Naive thymus-derived CD4-positive, alpha-beta T cell (primary cell): ENCODE measurements at regions of chr17 and their contacts with region 1.

Region 1: DNA sequence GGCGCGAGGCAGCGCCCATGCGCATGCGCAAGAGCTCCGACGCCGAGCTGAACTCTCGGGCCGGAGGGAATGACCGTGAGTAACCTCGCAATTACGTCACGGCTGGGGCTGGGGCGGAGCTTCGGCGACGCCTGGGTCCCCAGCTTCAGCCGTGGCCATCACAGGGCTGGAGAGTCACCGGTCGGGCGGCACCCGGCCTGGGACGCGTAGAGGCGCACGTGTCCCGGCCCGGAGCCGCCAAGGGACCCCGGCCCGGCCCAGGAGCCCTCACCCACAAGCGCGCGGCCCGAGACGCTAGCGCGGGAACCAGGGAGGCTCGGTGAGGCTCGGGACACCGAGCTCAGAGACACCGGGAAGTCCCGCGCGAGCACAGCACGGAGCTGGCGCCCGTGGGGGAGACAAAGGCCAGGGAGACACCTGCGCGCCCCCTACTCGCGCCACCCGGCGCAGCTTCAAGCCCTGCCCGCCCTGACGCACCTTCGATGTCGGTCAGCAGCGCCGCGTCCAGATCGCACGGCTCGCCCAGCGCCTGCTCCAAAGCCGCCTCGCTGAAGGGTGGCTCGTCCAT is 452 bp downstream of the SREBF1 start:
- DNase-seq: peak; percentile 93 to 99 (median 97)
- ATAC-seq: peak; percentile 85
- H3K4me3 ChIP-seq: peak overlapping the region; percentile 86
- H3K4me3 Mint-ChIP-seq: peak overlapping the region; percentile 85 to 95 (median 90)
- H3K27ac ChIP-seq: peak overlapping the region; percentile 99
- H3K27ac Mint-ChIP-seq: peak overlapping the region; percentile 94 to 99 (median 98)
- H3K4me1 ChIP-seq: peaks cover 18 to 60% of the 10 kb centered on the region in 2 donors
- H3K4me1 Mint-ChIP-seq: peaks cover 46 to 79% (median 75%) of the 10 kb centered on the region in 7 donors
- H3K27me3 ChIP-seq: no peaks in the 10 kb centered on the region
- H3K27me3 Mint-ChIP-seq: no peaks in the 10 kb centered on the region

Region 2: GRCh38 chr17:17849845-17850373 is 13.6 kb after region 1 on chr17:
- CTCF ChIA-PET with region 1: interaction called, 7 read pairs
- POLR2A ChIA-PET with region 1: interaction called, 66 read pairs
- intact Hi-C with region 1: loop called (anchors 1 kb)
- DNase-seq: peak; percentile 33 to 74 (median 69)
- ATAC-seq: peak; percentile 78
- H3K4me3 ChIP-seq: peak overlapping the region; percentile 17
- H3K4me3 Mint-ChIP-seq: peak overlapping the region; percentile 70 to 81 (median 76)
- H3K27ac ChIP-seq: peak overlapping the region; percentile 70
- H3K27ac Mint-ChIP-seq: peak overlapping the region; percentile 95 to 98 (median 96)
- H3K4me1 ChIP-seq: peaks cover 35 to 61% of the 10 kb centered on the region in 2 donors
- H3K4me1 Mint-ChIP-seq: peaks cover 45 to 82% (median 73%) of the 10 kb centered on the region in 7 donors
- H3K27me3 ChIP-seq: no peaks in the 10 kb centered on the region
- H3K27me3 Mint-ChIP-seq: no peaks in the 10 kb centered on the region

Region 3: DNA sequence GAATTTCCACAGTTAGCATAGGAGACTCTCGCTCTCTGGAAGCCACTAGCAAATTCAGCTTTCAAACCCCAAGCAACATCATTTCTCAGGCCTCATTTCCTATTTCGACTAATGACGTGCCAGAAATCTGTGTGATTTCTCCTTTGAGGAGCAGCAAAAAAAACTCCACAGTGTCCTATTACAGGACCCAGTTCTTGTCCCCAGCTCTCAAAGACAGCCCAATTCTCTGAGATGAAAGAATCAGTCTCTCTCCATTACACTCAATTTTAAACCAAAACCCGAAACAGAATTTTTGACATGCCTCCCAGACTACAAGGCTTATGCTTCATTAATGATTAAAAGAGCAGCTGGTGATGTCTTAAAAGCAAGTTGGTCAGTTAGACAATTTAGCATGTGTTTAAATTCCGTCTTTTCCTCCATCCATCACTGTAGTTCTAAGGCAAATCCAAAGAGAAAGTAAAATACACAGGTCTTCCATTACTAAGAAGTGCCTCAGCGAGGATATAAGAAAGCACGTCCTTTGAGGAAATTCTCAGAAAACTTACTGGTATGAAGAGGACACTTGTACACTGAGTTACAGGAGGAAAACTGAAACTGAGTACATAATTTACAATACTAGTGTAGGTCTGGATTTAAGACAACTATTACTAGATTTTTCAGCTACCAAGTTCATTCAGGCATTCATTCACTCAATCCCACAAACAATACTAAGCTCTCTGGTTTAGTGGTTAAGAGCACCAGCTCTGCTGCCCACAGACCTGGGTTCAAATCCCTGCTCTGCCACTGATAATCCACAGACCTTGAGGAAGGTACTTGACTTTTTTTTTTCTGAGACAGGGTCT is 123.4 kb after region 1 on chr17:
- CTCF ChIA-PET with region 1: no interaction called
- POLR2A ChIA-PET with region 1: no interaction called
- intact Hi-C with region 1: no loop called
- DNase-seq: peak in 7 of 9 donors; percentile 10 to 44 (median 27)
- ATAC-seq: peak; percentile 38
- H3K4me3 ChIP-seq: peak overlapping the region; percentile 37
- H3K4me3 Mint-ChIP-seq: peak overlapping the region; percentile 60 to 94 (median 86)
- H3K27ac ChIP-seq: peak overlapping the region; percentile 79
- H3K27ac Mint-ChIP-seq: peak overlapping the region; percentile 93 to 100 (median 98)
- H3K4me1 ChIP-seq: peaks cover 26 to 64% of the 10 kb centered on the region in 2 donors
- H3K4me1 Mint-ChIP-seq: peaks cover 50 to 87% (median 76%) of the 10 kb centered on the region in 7 donors
- H3K27me3 ChIP-seq: no peaks in the 10 kb centered on the region
- H3K27me3 Mint-ChIP-seq: no peaks in the 10 kb centered on the region